ENCODE measurements at regions of chr17 and their contacts with region 1.

Region 1: DNA sequence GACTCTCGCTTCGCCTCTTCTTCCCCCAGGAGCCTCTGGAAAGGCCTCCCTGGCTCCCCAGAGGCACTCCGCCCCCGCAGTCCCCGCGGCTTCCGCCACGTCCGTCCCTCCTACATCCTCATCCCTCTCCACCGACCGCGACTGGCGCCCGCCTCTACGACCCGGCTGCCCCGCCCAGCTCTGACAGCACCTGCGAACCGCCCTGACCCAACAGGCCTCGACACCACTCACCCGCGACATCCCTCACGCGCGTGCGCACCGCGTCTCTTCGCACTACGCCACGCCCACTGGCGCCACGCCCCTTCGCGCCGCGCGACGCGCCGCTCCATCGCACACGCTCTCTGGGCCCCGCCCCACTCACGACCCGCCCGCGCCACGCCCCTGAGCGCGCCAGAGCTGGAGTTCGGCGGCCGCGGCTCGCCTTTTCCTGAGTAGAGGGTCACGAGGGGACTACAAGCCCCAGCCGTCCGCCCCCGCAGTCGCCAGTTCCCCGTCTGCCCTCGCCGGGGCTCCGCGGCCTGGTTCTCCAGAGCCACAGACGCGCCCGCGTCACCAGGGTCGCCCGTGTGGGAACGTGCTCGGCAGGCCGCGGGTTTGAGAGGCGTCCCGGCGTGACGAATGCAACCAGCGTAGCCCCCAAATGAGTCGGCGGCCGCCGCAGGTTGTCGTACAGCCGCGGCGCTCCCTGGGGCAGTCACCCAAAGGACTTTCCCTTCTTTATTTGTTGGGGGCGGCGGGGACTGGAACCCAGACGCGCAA is 56.2 kb upstream of the LRRC37A3 start:
- DNase-seq: peak; percentile 87
- ATAC-seq: peak; percentile 96
- H3K4me3 ChIP-seq: peak overlapping the region; percentile 76
- H3K27ac ChIP-seq: peak overlapping the region; percentile 85
- H3K4me1 ChIP-seq: peaks cover 5% of the 10 kb centered on the region
- H3K27me3 ChIP-seq: no peaks in the 10 kb centered on the region
- CTCF ChIP-seq: no peak
- POLR2A ChIP-seq: peak; percentile 74
- RAD21 ChIP-seq: no peak; the same call in 1 of the 2 replicates

Region 2: DNA sequence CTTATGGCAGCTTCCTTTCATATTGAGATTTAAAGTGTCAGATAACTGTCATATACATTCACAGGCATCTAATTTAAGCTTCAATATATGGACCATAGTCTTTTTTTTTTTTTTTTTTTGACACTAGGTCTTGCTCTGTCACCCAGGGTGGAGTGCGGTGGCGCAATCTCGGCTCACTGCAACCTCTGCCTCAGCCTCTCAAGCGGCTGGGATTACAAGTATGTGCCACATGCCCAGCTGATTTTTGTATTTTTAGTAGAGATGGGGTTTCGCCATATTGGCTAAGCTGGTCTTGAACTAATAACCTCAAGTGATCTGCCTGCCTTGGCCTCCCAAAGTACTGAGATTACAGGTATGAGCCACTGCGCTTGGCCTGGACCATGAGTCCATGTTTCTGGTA is 455.1 kb before region 1 on chr17:
- CTCF ChIA-PET with region 1: no interaction called
- POLR2A ChIA-PET with region 1: interaction called, 14 read pairs
- dilution Hi-C with region 1: no loop called
- in situ Hi-C with region 1: no loop called
- intact Hi-C with region 1: no loop called
- DNase-seq: no peak
- ATAC-seq: no peak
- H3K4me3 ChIP-seq: no peak overlapping the region
- H3K27ac ChIP-seq: no peak overlapping the region
- H3K4me1 ChIP-seq: no peaks in the 10 kb centered on the region
- H3K27me3 ChIP-seq: no peaks in the 10 kb centered on the region
- CTCF ChIP-seq: no peak
- POLR2A ChIP-seq: no peak; the same call in 1 of the 2 replicates
- RAD21 ChIP-seq: no peak

Region 3: GRCh38 chr17:65027305-65027704 is 51.8 kb after region 1 on chr17:
- CTCF ChIA-PET with region 1: no interaction called
- POLR2A ChIA-PET with region 1: no interaction called
- dilution Hi-C with region 1: no loop called
- in situ Hi-C with region 1: no loop called
- intact Hi-C with region 1: loop called (anchors 5 kb)
- DNase-seq: peak; percentile 83
- ATAC-seq: peak; percentile 75
- H3K4me3 ChIP-seq: no peak overlapping the region
- H3K27ac ChIP-seq: no peak overlapping the region
- H3K4me1 ChIP-seq: peaks cover 12% of the 10 kb centered on the region
- H3K27me3 ChIP-seq: no peaks in the 10 kb centered on the region
- CTCF ChIP-seq: peak; percentile 47
- POLR2A ChIP-seq: no peak
- RAD21 ChIP-seq: peak; percentile 41

Region 4: DNA sequence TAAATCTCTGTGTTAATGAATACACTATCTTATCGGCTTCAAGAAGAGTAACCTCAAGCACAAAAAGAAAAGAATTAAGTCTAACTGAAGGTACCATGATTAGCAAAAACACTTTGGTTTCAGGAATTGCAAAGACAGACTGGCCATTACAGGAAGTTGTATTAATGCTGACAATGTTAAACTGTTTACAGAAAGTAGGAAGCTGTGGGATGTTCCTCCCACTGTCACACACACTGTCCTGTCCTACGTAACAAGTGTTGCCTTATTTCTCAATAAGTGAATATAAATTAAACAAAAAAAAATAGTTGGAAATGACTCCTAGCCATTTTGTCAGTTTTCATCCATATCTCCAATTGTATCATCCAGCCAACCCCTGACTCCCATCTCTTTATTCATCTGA is 72.4 kb after region 1 on chr17:
- CTCF ChIA-PET with region 1: no interaction called
- POLR2A ChIA-PET with region 1: no interaction called
- dilution Hi-C with region 1: no loop called
- in situ Hi-C with region 1: no loop called
- intact Hi-C with region 1: loop called (anchors 5 kb)
- DNase-seq: peak; percentile 36
- ATAC-seq: peak; percentile 78
- H3K4me3 ChIP-seq: no peak overlapping the region
- H3K27ac ChIP-seq: peak overlapping the region; percentile 22
- H3K4me1 ChIP-seq: peaks cover 11% of the 10 kb centered on the region
- H3K27me3 ChIP-seq: no peaks in the 10 kb centered on the region
- CTCF ChIP-seq: no peak
- POLR2A ChIP-seq: no peak
- RAD21 ChIP-seq: no peak

Region 5: GRCh38 chr17:65100316-65101140 is 125.0 kb after region 1 on chr17:
- CTCF ChIA-PET with region 1: no interaction called
- POLR2A ChIA-PET with region 1: no interaction called
- dilution Hi-C with region 1: no loop called
- in situ Hi-C with region 1: no loop called
- intact Hi-C with region 1: loop called (anchors 2 kb)
- DNase-seq: peak; percentile 47
- ATAC-seq: peak; percentile 98
- H3K4me3 ChIP-seq: peak overlapping the region; percentile 51
- H3K27ac ChIP-seq: no peak overlapping the region
- H3K4me1 ChIP-seq: peaks cover 7% of the 10 kb centered on the region
- H3K27me3 ChIP-seq: no peaks in the 10 kb centered on the region
- CTCF ChIP-seq: peak; percentile 85
- POLR2A ChIP-seq: no peak
- RAD21 ChIP-seq: peak; percentile 62

Region 6: GRCh38 chr17:65122836-65123756 is 147.6 kb after region 1 on chr17:
- CTCF ChIA-PET with region 1: no interaction called
- POLR2A ChIA-PET with region 1: no interaction called
- dilution Hi-C with region 1: no loop called
- in situ Hi-C with region 1: no loop called
- intact Hi-C with region 1: loop called (anchors 5 kb)
- DNase-seq: peak; percentile 90
- ATAC-seq: peak; percentile 97
- H3K4me3 ChIP-seq: peak overlapping the region; percentile 55
- H3K27ac ChIP-seq: peak overlapping the region; percentile 98
- H3K4me1 ChIP-seq: peaks cover 8% of the 10 kb centered on the region
- H3K27me3 ChIP-seq: no peaks in the 10 kb centered on the region
- CTCF ChIP-seq: no peak
- POLR2A ChIP-seq: peak; percentile 83
- RAD21 ChIP-seq: no peak